PC-9 (cell line): ENCODE measurements at regions of chr7 and their contacts with region 1.

Region 1: GRCh38 chr7:44477063-44477830 is 13.2 kb downstream of the NUDCD3 start:
- DNase-seq: peak; percentile 79 to 87
- H3K4me3 ChIP-seq: no peak overlapping the region
- H3K27ac ChIP-seq: no peak overlapping the region
- H3K4me1 ChIP-seq: peaks cover 29% of the 10 kb centered on the region
- H3K27me3 ChIP-seq: no peaks in the 10 kb centered on the region
- CTCF ChIP-seq: peak; percentile 99

Region 2: GRCh38 chr7:43764039-43764761 is 713.0 kb before region 1 on chr7:
- CTCF ChIA-PET with region 1: no interaction called
- POLR2A ChIA-PET with region 1: interaction called, 25 read pairs
- intact Hi-C with region 1: no loop called
- DNase-seq: peak in 1 of 2 experiments; percentile 31
- H3K4me3 ChIP-seq: peak overlapping the region; percentile 7; the same call in 1 of the 2 replicates
- H3K27ac ChIP-seq: peak overlapping the region; percentile 71
- H3K4me1 ChIP-seq: peaks cover 73% of the 10 kb centered on the region
- H3K27me3 ChIP-seq: no peaks in the 10 kb centered on the region
- CTCF ChIP-seq: no peak

Region 3: DNA sequence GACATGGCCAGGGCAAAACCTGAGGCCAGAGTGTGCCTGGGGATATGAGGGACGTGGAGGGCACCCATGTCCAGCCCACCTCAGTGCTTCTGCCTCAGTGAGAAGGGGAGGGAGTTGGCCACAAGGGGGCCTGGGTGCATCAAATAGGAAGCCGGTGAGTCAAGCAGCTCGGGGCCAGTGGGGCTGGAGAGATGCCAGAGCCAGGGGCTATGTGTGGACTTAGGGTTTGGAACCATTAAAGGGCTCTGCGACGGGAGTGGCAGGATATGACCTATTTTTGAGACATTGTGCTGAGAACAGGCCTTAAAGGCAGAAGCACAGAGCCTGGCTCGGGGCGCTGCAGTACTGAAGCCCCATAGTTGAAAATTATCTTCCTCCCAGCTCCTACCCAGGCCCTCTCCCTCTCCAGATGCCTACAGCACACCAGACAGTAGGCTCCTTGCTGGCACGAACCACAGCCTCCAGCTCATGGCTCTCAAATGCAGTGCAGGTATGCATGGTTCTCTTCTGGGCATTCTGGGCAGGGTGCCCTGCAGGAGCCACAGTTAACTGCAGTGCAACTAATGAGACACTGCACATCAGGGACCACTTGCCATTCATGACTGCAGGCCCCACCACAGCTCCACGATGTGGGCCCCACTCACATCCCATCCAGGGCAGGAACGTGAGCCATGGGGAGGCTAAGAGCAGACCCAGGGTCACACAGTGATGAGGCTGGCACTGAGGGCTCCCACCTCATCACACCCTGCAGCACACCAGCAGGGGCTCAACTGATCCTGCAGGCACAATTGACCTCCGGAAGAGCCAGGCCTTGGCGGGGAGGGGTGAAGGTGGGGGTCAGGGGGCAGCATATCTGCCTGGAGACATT is 404.6 kb before region 1 on chr7:
- CTCF ChIA-PET with region 1: interaction called, 6 read pairs
- POLR2A ChIA-PET with region 1: no interaction called
- intact Hi-C with region 1: loop called (anchors 1 kb)
- DNase-seq: peak; percentile 94 to 96
- H3K4me3 ChIP-seq: peak overlapping the region; percentile 30; the same call in 1 of the 2 replicates
- H3K27ac ChIP-seq: peak overlapping the region; percentile 27
- H3K4me1 ChIP-seq: peaks cover 47% of the 10 kb centered on the region
- H3K27me3 ChIP-seq: no peaks in the 10 kb centered on the region
- CTCF ChIP-seq: peak; percentile 93

Region 4: GRCh38 chr7:44177570-44178131 is 299.6 kb before region 1 on chr7:
- CTCF ChIA-PET with region 1: no interaction called
- POLR2A ChIA-PET with region 1: no interaction called
- intact Hi-C with region 1: no loop called
- DNase-seq: peak; percentile 45 to 79
- H3K4me3 ChIP-seq: no peak overlapping the region
- H3K27ac ChIP-seq: no peak overlapping the region
- H3K4me1 ChIP-seq: peaks cover 41% of the 10 kb centered on the region
- H3K27me3 ChIP-seq: no peaks in the 10 kb centered on the region
- CTCF ChIP-seq: no peak

Region 5: DNA sequence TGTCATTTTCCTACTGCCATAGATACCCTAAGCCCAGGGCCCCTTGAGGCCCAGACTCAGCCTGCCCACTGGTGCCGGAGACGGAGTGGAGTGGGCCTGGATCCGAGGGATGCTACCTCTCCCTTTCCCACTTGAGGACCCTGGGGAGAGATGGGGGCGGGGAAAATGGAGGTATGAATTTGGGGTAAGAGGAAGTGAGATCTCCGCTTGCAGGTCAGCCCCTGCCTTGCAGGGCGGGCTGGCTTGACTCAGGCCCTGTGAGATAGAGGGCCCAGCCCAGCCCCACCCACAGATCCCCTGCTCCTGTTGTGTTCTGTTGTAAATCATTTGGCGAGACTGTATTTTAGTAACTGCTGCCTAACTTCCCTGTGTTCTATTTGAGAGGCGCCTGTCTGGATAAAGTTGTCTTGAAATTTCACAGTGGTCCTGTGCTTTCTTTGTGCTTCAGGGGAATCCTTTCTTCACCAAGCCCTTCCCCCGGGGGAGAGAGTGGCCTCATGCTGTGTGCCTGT is 263.3 kb before region 1 on chr7:
- CTCF ChIA-PET with region 1: no interaction called
- POLR2A ChIA-PET with region 1: no interaction called
- intact Hi-C with region 1: loop called (anchors 5 kb)
- DNase-seq: no peak
- H3K4me3 ChIP-seq: no peak overlapping the region
- H3K27ac ChIP-seq: no peak overlapping the region
- H3K4me1 ChIP-seq: no peaks in the 10 kb centered on the region
- H3K27me3 ChIP-seq: no peaks in the 10 kb centered on the region
- CTCF ChIP-seq: no peak

Region 6: DNA sequence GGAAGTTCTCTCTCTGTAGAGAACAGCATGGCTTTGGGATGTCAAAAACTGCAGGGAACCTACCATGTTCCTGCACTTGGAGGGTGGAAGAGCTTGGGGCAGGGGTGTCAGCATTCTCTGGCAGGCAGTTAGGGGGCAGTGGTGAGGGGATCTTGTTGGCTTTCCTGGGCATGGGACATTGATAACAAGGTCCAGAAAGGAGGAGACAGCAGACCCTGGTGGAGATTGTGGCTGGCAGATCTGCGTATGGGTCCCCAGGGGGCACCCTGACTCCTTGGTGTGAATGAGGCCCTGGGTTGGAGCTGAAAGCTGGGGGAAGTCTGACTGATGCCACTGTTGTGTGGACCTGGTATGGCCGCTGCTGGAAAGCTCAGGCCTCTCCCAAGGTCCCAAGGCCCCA is 128.9 kb before region 1 on chr7:
- CTCF ChIA-PET with region 1: interaction called, 3 read pairs
- POLR2A ChIA-PET with region 1: no interaction called
- intact Hi-C with region 1: loop called (anchors 1 kb)
- DNase-seq: peak in 1 of 2 experiments; percentile 28
- H3K4me3 ChIP-seq: no peak overlapping the region
- H3K27ac ChIP-seq: no peak overlapping the region
- H3K4me1 ChIP-seq: no peaks in the 10 kb centered on the region
- H3K27me3 ChIP-seq: no peaks in the 10 kb centered on the region
- CTCF ChIP-seq: peak; percentile 58